Calu3 (cell line): ENCODE measurements at regions of chr7 and their contacts with region 1.

Region 1: DNA sequence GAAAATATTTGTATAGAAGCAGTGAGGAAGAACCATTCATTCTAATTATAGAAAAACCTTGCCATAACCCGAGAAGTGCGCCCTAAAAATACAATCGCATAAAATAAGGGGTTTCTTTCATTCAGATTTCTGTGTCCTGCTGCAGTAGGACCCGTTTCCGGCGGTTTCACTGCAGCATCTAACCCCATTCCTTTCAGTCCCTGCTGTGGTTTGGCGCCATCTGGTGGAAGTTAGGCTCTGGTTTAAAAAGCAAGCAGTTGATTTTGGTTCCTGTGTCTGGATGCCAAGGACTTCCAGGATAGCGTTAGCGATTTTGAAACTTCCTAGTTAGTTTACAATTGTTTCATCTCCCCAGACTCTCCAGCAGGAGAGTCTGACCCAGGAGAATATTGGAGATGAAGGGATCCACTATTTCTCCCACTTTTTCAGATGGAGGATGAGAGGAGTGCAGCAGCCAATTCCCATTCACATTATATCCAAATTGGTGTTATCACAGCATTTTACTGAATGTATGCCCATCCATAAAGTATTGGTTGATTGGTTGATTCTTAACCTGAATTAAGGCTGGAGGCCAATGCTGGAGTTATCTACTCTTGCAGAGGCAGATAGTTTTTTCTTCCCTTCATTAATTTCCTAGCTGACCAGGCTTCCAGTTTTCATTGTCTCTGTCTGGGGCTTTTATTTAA is 128.8 kb upstream of the CACNA2D1 start:
- DNase-seq: peak; percentile 76
- H3K4me3 Mint-ChIP-seq: no peak overlapping the region
- H3K27ac Mint-ChIP-seq: no peak overlapping the region
- H3K4me1 Mint-ChIP-seq: no peaks in the 10 kb centered on the region
- H3K27me3 Mint-ChIP-seq: no peaks in the 10 kb centered on the region
- CTCF ChIP-seq: peak; percentile 60

Region 2: GRCh38 chr7:82443547-82444219 is 128.7 kb before region 1 on chr7 and contains the start of gene CACNA2D1:
- CTCF ChIA-PET with region 1: no interaction called
- intact Hi-C with region 1: loop called (anchors 1 kb)
- DNase-seq: peak; percentile 44
- H3K4me3 Mint-ChIP-seq: peak within 1 kb of the TSS; percentile 88
- H3K27ac Mint-ChIP-seq: peak within 1 kb of the TSS; percentile 70
- H3K4me1 Mint-ChIP-seq: no peaks in the 10 kb centered on the region
- H3K27me3 Mint-ChIP-seq: no peaks in the 10 kb centered on the region
- CTCF ChIP-seq: no peak
- total RNA-seq, gene CACNA2D1: 10.1 and 10.4 TPM in 2 replicates

Region 3: GRCh38 chr7:82481499-82482097 is 90.7 kb before region 1 on chr7:
- CTCF ChIA-PET with region 1: no interaction called
- intact Hi-C with region 1: loop called (anchors 5 kb)
- DNase-seq: no peak
- H3K4me3 Mint-ChIP-seq: no peak overlapping the region
- H3K27ac Mint-ChIP-seq: no peak overlapping the region
- H3K4me1 Mint-ChIP-seq: no peaks in the 10 kb centered on the region
- H3K27me3 Mint-ChIP-seq: no peaks in the 10 kb centered on the region
- CTCF ChIP-seq: peak; percentile 37

Region 4: DNA sequence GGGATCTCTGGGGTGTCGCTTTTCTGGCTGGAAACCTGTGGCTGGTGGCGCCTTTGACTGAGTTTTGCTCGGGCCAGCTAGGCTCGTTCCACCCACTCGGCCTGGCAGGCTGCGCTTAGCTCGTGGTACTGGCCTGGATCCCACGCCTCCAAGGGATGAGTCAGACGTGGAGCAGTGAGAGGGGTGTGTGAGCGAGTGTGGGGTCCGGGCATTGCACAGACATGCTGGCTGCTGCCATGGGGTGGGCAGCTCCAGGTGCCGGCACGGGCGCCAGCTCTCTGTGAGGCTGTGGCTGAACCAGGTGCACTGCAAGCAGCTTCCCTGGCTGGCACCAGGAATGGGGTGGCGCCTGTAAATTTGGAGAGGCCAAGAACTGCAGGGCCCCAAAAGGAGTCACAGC is 65.6 kb before region 1 on chr7:
- CTCF ChIA-PET with region 1: interaction called, 4 read pairs
- intact Hi-C with region 1: loop called (anchors 5 kb)
- DNase-seq: peak; percentile 16
- H3K4me3 Mint-ChIP-seq: peak overlapping the region; percentile 49
- H3K27ac Mint-ChIP-seq: peak overlapping the region; percentile 59
- H3K4me1 Mint-ChIP-seq: peaks cover 10% of the 10 kb centered on the region
- H3K27me3 Mint-ChIP-seq: no peaks in the 10 kb centered on the region
- CTCF ChIP-seq: no peak

Region 5: GRCh38 chr7:82615527-82615926 is 43.2 kb after region 1 on chr7:
- CTCF ChIA-PET with region 1: no interaction called
- intact Hi-C with region 1: no loop called
- DNase-seq: no peak
- H3K4me3 Mint-ChIP-seq: no peak overlapping the region
- H3K27ac Mint-ChIP-seq: no peak overlapping the region
- H3K4me1 Mint-ChIP-seq: no peaks in the 10 kb centered on the region
- H3K27me3 Mint-ChIP-seq: no peaks in the 10 kb centered on the region
- CTCF ChIP-seq: no peak

Region 6: GRCh38 chr7:82633592-82633991 is 61.3 kb after region 1 on chr7:
- CTCF ChIA-PET with region 1: no interaction called
- intact Hi-C with region 1: no loop called
- DNase-seq: no peak
- H3K4me3 Mint-ChIP-seq: no peak overlapping the region
- H3K27ac Mint-ChIP-seq: no peak overlapping the region
- H3K4me1 Mint-ChIP-seq: no peaks in the 10 kb centered on the region
- H3K27me3 Mint-ChIP-seq: peaks cover 12% of the 10 kb centered on the region
- CTCF ChIP-seq: no peak